ENCODE measurements at regions of chr5 and their contacts with region 1.

Region 1: DNA sequence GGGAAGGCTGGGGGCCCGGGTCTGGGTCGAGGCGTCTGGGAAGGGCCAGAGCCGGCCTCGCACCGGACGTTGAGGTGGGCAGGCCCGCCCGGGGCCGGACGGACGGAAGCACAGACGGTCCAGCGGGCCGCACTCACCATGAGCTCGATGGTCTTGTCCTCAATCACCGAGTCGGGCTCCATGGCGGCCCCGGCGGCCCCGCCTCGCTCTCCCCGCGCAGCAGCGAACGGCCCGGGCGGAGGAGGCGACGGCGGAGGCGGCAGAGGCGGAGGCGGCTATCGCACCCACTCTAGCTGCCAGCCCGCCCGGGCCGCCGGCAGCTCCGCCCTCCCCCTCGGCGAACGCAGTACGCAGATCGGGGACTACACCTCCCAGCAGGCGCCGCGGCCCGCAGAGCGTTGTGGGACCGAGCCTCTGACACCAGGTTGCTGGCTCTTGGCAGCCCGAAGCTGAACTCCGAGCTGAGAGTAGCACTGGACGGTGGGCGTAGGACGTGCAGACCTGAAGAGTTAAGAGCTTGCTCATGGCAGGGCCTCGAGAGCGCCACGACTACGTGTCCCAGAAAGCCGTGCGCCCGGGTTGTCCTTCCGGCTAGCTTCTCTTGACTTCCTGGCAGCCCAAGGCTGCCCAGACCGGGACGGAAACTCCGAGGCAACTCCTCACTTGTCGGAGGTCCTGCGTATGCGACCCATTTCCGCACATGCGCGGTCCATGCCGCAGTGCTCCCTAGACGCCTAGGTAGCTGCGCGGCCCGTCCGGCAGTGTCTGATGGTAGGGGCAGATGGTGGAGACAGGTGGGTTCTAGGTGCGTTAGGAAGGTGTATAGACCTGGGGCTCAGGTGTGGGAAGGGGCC is at the start of gene FBXW11:
- H3K4me3 ChIP-seq: peak within 1 kb of the TSS; percentile 90
- H3K27ac ChIP-seq: peak within 1 kb of the TSS; percentile 97
- H3K4me1 ChIP-seq: peaks cover 23% of the 10 kb centered on the region
- CTCF ChIP-seq: no peak

Region 2: DNA sequence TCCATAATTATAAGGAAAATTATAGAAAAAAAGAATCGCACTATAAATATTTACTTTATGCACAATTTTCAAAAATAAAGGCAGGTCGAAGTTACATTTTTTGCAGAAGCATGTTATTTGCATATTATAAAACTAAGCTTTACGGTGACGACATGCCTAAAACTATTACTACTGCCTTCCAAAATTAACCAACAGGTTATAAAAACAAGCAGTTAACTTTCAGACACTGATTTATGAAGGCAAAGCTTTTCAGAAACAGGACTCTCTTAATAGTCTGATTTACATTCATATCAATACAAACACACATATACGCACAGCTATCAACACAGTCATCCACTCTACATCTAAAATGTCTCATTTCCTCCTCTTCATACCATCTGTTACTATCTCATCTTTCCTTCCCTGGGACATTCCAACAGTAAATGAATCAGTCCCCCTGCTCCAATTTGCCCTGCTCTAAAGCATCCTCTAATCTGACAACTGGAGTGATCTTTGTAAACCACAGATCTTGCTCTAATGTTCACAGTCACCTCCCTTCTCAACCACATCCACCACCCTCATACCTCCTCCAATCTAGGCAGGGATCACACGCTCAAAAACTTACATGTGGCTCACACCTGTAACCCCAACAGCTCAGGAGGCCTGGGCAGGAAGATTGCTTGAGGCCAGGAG is 21.7 kb before region 1 on chr5:
- CTCF ChIA-PET with region 1: interaction called, 3 read pairs
- POLR2A ChIA-PET with region 1: interaction called, 11 read pairs
- H3K4me3 ChIP-seq: no peak overlapping the region
- H3K27ac ChIP-seq: no peak overlapping the region
- H3K4me1 ChIP-seq: peaks cover 18% of the 10 kb centered on the region
- CTCF ChIP-seq: no peak

Region 3: GRCh38 chr5:172078726-172079345 is 72.3 kb after region 1 on chr5:
- CTCF ChIA-PET with region 1: no interaction called
- POLR2A ChIA-PET with region 1: no interaction called
- H3K4me3 ChIP-seq: no peak overlapping the region
- H3K27ac ChIP-seq: no peak overlapping the region
- H3K4me1 ChIP-seq: no peaks in the 10 kb centered on the region
- CTCF ChIP-seq: no peak

Measured in HEK293 (cell line).